ENCODE measurements at regions of chr16 and their contacts with region 1.

Region 1: DNA sequence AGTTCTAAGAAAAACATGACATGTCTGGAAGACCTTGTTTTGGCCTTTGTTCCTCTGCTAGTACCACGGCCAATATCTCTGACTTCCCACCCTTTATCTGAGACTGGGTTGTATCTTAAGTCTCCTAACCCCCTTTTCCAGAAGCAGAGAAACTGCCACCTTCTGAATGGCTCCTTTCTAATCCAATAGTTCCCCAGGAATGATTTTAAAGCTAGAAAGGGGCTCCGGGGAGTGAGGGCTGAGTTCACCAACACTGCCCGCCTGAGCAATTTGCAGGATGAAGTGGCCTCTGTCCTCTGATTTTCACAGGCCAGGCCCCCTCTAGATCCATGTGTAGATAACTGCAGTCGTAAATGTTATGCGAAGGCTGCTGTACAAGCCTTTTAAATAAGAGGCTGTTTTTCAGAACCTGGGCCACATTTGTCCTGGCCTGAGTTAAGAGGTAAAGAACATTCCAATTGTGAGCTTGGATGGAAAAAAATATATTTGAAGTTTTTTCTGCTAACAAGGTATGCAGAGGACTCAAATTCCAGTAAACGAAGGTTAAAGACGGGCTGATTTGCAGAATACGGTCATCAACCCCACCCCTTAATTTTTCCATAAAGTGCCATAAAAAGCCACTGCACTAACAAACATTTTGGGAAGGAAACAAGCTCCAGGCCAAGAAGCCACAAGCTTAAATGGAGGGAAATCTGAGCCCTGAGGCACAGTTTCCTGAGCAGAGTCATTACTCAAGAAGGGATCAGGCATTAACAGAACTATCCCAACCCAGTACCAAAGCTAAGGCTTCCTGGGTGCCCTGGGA is 117.0 kb upstream of the MAF start:
- DNase-seq: no peak
- H3K4me3 ChIP-seq: no peak overlapping the region
- H3K27ac ChIP-seq: peak overlapping the region; percentile 49 to 89 (median 77)
- H3K4me1 ChIP-seq: peaks cover 46 to 51% of the 10 kb centered on the region in 2 donors
- H3K27me3 ChIP-seq: no peaks in the 10 kb centered on the region
- CTCF ChIP-seq: no peak
- POLR2A ChIP-seq: no peak

Region 2: GRCh38 chr16:79658301-79659033 is 59.1 kb before region 1 on chr16:
- intact Hi-C with region 1: loop called (anchors 10 kb)
- DNase-seq: no peak
- H3K4me3 ChIP-seq: no peak overlapping the region
- H3K27ac ChIP-seq: no peak overlapping the region
- H3K4me1 ChIP-seq: peaks cover 2 to 15% of the 10 kb centered on the region in 2 donors
- H3K27me3 ChIP-seq: no peaks in the 10 kb centered on the region
- CTCF ChIP-seq: no peak
- POLR2A ChIP-seq: no peak

Region 3: GRCh38 chr16:79805621-79806020 is 88.1 kb after region 1 on chr16:
- intact Hi-C with region 1: no loop called
- DNase-seq: no peak
- H3K4me3 ChIP-seq: no peak overlapping the region
- H3K27ac ChIP-seq: no peak overlapping the region
- H3K4me1 ChIP-seq: no peaks in the 10 kb centered on the region
- H3K27me3 ChIP-seq: no peaks in the 10 kb centered on the region
- CTCF ChIP-seq: no peak
- POLR2A ChIP-seq: no peak

Measured in thyroid gland (tissue), 4 donors.